ENCODE measurements at regions of chr22 and their contacts with region 1.

Region 1: GRCh38 chr22:50148991-50149721 is 21.4 kb upstream of the PANX2 start:
- DNase-seq: peak; percentile 80
- H3K4me3 Mint-ChIP-seq: no peak overlapping the region
- H3K27ac Mint-ChIP-seq: no peak overlapping the region
- H3K4me1 Mint-ChIP-seq: peaks cover 16% of the 10 kb centered on the region
- H3K27me3 Mint-ChIP-seq: peaks cover 37% of the 10 kb centered on the region
- CTCF ChIP-seq: peak; percentile 89

Region 2: GRCh38 chr22:49880281-49880680 is 268.9 kb before region 1 on chr22:
- CTCF ChIA-PET with region 1: no interaction called
- intact Hi-C with region 1: no loop called
- DNase-seq: no peak
- H3K4me3 Mint-ChIP-seq: no peak overlapping the region
- H3K27ac Mint-ChIP-seq: no peak overlapping the region
- H3K4me1 Mint-ChIP-seq: no peaks in the 10 kb centered on the region
- H3K27me3 Mint-ChIP-seq: no peaks in the 10 kb centered on the region
- CTCF ChIP-seq: no peak

Region 3: DNA sequence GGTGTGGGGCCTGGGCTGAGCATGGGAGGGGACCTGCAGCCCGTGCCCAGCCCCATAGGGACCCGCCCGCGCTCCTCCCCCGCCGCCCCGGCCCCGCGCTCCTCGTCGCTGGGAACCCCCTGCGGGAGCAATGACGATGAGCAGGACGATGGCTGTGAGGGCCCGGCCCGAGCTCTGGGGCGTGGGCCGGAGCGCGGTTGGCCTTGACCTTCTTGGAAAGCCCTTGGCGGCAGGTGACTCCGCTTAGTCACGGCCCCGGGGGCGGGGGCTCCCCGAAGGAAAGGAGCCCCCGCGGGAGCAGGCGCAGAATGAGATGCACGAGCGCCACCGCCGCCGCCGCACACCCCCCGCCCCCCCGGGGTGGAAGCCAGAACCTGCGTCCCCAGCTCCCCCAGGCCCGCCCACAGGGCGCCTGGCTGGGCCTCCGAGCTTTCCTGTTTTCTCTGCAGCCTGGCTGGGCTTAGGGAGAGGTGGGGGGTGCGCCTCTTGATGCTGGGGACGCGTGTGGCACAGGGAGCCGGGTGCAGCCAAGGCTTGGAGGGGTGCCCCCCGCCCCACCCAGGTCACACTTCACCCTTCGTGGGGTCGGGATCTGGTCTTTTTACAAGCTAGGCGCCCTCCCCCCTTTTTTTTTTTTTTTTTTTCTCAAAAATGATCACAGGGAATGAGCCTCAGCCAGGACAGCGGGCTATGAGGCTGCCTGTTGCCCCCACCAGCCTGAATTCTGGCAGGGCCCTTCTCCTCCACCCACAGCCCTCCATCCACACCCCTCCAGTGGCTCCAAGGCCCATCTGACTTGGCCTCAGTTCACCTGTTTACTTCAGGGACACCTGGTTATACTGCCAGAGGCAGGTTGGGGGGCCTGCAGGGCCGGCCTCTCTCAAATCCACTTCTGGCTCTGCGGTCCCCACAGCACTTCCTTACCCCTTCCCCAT is 212.9 kb before region 1 on chr22:
- CTCF ChIA-PET with region 1: interaction called, 3 read pairs
- intact Hi-C with region 1: loop called (anchors 10 kb)
- DNase-seq: peak; percentile 91
- H3K4me3 Mint-ChIP-seq: peak overlapping the region; percentile 43
- H3K27ac Mint-ChIP-seq: peak overlapping the region; percentile 72
- H3K4me1 Mint-ChIP-seq: peaks cover 18% of the 10 kb centered on the region
- H3K27me3 Mint-ChIP-seq: no peaks in the 10 kb centered on the region
- CTCF ChIP-seq: no peak

Region 4: DNA sequence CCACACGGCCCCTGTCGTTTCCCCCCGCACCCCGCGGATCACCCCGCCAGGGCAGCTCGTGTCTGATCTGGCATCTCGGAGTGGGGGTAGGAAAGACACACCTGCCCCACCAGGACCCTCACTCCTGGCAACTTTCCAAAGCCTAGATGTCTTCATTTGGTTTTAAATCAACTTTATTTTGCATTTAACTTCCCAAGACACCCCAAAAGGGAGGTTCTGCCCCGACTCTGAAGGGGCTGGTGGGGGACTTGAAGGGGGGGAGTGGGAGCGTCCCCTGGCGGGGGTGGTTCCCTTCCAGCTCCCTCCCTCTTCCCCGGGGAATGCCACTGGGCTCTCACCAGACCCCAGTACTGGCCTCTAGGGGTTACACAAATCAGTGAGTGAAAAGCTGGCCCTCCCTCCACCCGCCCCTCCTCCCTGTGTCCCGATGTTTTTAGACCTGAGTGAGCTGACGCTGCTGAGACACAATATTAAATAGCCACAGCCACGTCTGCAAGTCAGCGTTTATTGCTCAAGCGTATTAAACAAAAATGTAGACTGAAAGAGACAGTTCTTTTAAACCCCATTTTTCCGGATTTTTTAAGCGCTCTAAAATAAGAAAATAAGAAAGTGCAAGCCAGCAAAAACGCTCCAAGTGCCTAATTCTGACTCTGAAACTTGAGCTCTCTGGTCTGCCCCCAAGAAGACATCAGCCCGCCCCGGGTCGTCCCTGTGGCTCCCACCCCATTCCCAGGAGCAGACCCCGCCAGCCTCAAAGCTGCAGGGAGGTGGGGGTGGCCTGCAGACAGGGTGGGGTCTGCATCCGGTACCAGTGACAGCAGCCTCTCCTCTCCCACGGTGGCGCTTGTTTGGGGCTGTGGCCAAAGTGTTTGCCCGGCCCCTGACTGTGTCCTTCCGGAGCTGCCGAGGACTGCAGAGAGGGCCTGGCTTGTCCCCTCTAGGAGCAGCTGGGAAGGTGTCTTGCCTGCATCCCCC is 90.0 kb before region 1 on chr22:
- CTCF ChIA-PET with region 1: no interaction called
- intact Hi-C with region 1: no loop called
- DNase-seq: no peak
- H3K4me3 Mint-ChIP-seq: no peak overlapping the region
- H3K27ac Mint-ChIP-seq: no peak overlapping the region
- H3K4me1 Mint-ChIP-seq: peaks cover 14% of the 10 kb centered on the region
- H3K27me3 Mint-ChIP-seq: peaks cover 71% of the 10 kb centered on the region
- CTCF ChIP-seq: no peak

Region 5: DNA sequence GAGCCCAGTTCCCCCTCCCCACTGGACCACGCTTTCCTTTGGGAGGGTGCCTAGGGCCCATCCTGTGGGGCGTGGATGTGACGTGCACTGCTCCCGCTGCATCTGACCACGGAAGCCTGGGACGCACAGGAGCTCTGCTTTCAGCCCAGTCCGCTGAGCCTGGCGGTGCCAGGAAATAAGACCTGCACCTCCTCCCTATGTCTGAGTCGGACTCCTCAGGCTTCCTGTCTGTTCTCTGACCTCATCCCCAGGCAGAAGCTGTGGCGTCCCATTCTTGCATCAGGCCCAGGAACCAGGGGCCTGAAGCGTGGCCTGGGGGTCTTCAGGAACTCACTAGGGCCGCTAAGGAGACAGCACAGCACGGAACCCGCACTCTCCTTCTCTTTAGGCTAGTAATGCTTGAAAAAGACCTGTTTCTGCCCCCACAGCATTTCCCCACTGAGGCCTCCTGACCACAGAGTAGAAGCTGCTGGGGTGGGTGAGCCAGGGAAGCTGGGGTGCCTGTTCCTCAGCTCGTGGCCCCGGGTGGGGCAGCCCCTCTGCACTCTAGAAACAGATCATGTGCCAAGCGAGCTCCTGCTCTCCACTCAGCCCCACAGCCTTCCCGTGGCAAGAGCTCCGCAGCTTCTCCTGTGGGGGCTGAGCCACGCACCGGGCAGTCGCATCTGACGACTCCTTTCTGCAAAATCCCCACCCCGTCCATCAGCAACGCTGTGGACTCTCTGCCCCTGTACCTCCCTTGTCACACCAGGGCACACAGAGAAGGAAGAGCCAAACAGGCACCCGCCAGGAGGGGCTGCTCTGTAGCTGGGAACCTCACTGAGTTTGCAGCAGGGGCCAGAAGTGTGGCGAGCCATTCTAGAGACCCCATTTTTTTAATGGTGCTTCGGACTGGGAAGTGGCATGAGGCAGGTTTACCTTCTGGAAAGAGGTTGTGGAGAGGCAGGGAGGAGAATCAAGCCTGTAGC is 36.7 kb before region 1 on chr22:
- CTCF ChIA-PET with region 1: no interaction called
- intact Hi-C with region 1: no loop called
- DNase-seq: peak; percentile 14
- H3K4me3 Mint-ChIP-seq: no peak overlapping the region
- H3K27ac Mint-ChIP-seq: no peak overlapping the region
- H3K4me1 Mint-ChIP-seq: no peaks in the 10 kb centered on the region
- H3K27me3 Mint-ChIP-seq: peaks cover 41% of the 10 kb centered on the region
- CTCF ChIP-seq: no peak

Region 6: GRCh38 chr22:50209893-50210292 is 60.7 kb after region 1 on chr22:
- CTCF ChIA-PET with region 1: interaction called, 7 read pairs
- intact Hi-C with region 1: loop called (anchors 1 kb)
- DNase-seq: peak; percentile 69
- H3K4me3 Mint-ChIP-seq: no peak overlapping the region
- H3K27ac Mint-ChIP-seq: peak overlapping the region; percentile 50
- H3K4me1 Mint-ChIP-seq: peaks cover 7% of the 10 kb centered on the region
- H3K27me3 Mint-ChIP-seq: no peaks in the 10 kb centered on the region
- CTCF ChIP-seq: peak; percentile 68

Region 7: GRCh38 chr22:50444663-50445062 is 295.5 kb after region 1 on chr22:
- CTCF ChIA-PET with region 1: no interaction called
- intact Hi-C with region 1: no loop called
- DNase-seq: peak; percentile 40
- H3K4me3 Mint-ChIP-seq: no peak overlapping the region
- H3K27ac Mint-ChIP-seq: no peak overlapping the region
- H3K4me1 Mint-ChIP-seq: peaks cover 11% of the 10 kb centered on the region
- H3K27me3 Mint-ChIP-seq: no peaks in the 10 kb centered on the region
- CTCF ChIP-seq: no peak

Region 8: DNA sequence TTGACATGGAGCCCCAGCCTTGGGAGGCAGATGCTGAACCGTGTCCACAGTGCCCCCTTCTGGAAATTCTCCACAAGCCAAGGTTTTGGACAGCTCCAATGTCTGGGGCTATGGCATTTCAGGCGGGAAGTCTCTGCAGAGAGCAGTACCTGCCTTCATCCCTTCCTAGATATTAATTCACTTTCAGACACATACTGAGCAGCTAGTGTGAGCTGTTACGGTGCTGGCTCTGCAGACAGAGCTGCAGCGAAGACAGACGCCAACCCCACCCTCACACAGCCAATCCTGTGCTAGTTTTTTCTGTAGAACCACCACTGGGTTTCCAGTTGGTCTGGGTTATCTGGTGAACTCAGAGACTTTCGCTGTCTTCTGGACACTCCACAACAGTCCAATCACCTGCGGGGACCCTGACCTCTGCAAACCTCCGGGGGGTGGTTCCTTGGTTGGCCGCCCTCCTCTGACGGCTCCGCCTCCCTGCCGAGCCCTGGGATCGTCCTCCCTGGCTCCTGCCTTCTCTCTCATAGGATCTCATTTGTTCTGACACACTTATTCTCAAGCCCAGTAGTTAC is 349.2 kb after region 1 on chr22:
- CTCF ChIA-PET with region 1: interaction called, 4 read pairs
- intact Hi-C with region 1: loop called (anchors 5 kb)
- DNase-seq: peak; percentile 83
- H3K4me3 Mint-ChIP-seq: peak overlapping the region; percentile 48
- H3K27ac Mint-ChIP-seq: no peak overlapping the region
- H3K4me1 Mint-ChIP-seq: peaks cover 32% of the 10 kb centered on the region
- H3K27me3 Mint-ChIP-seq: no peaks in the 10 kb centered on the region
- CTCF ChIP-seq: peak; percentile 77

Measured in Calu3 (cell line).